PC-9 (cell line): ENCODE measurements at regions of chrX and their contacts with region 1.

Region 1: GRCh38 chrX:17744896-17745523 is 7.7 kb downstream of the SCML1 start:
- DNase-seq: no peak
- H3K4me3 ChIP-seq: no peak overlapping the region
- H3K27ac ChIP-seq: no peak overlapping the region
- H3K4me1 ChIP-seq: peaks cover 22% of the 10 kb centered on the region
- H3K27me3 ChIP-seq: no peaks in the 10 kb centered on the region
- CTCF ChIP-seq: peak; percentile 52

Region 2: DNA sequence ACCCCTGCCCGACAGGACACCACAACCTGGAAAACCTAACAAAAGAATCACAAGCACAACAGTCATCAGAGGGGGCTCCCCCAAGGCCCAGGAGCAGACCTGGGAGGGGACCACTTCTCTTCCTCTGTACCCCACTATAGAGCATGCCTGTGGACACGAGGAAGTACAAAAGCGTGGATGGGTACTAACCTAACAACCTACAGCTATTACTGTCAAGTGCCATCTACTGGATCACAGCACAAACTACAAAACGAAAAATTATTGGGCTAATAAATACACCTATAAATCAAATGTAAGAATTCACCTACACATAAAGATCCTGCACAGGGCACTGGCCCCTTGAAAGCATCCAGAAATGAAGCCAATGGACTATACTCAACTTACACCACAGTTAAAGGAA is 534.0 kb after region 1 on chrX:
- CTCF ChIA-PET with region 1: no interaction called
- POLR2A ChIA-PET with region 1: no interaction called
- intact Hi-C with region 1: loop called (anchors 5 kb)
- DNase-seq: no peak
- H3K4me3 ChIP-seq: no peak overlapping the region
- H3K27ac ChIP-seq: no peak overlapping the region
- H3K4me1 ChIP-seq: no peaks in the 10 kb centered on the region
- H3K27me3 ChIP-seq: no peaks in the 10 kb centered on the region
- CTCF ChIP-seq: no peak; the same call in 1 of the 2 replicates

Region 3: DNA sequence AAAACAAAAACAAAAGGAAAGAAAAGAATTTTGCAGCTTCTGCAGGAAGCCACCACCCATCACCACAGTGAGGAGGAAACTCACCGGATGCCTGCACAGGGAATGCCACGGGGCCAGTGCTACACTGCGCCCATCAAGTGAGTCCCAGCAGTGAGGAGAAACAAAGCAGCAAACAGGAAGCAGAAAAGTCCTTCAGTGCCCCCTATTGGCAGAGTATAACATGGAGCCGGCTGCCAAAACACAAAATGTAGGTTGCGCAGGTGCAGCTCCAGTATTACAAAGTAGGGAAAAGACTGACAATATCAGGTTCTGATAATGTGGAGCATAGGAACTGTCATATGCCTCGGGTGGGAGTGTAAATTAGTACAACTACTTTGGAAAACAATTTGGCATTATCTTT is 632.8 kb after region 1 on chrX:
- CTCF ChIA-PET with region 1: no interaction called
- POLR2A ChIA-PET with region 1: no interaction called
- intact Hi-C with region 1: loop called (anchors 10 kb)
- DNase-seq: peak in 1 of 2 experiments; percentile 8
- H3K4me3 ChIP-seq: no peak overlapping the region
- H3K27ac ChIP-seq: no peak overlapping the region
- H3K4me1 ChIP-seq: no peaks in the 10 kb centered on the region
- H3K27me3 ChIP-seq: 0 out of 2 replicates have a peak, but pooled peaks cover 6% of the 10 kb centered on the region
- CTCF ChIP-seq: peak; percentile 43; the same call in 1 of the 2 replicates